ENCODE measurements at regions of chr2 and their contacts with region 1.

Region 1: DNA sequence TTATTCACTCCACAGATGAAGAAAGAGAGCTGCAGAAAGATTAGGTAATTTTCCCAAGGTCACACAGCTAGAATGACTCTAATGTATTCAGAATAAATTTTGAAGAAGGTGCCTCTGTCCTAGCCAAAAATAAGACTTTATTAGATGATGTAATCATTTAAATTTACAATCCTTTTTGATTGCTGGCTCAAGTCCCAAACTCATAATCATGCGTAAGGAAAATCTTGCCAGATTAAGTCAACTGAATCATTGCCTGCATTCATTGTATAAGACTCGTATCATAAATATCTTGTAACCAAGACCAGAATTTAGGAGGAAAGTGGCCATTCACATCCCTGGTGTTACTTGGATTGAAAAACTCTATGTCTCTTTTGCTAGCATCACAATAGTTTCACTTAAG is 53.1 kb upstream of the STK39 start:
- DNase-seq: no peak
- ATAC-seq: no peak
- H3K4me3 ChIP-seq: no peak overlapping the region
- H3K4me3 Mint-ChIP-seq: no peak overlapping the region
- H3K27ac ChIP-seq: no peak overlapping the region
- H3K27ac Mint-ChIP-seq: no peak overlapping the region
- H3K4me1 ChIP-seq: no peaks in the 10 kb centered on the region
- H3K4me1 Mint-ChIP-seq: peaks cover 0 to 1% (median 0%) of the 10 kb centered on the region in 7 donors
- H3K27me3 ChIP-seq: no peaks in the 10 kb centered on the region
- H3K27me3 Mint-ChIP-seq: peaks cover 0 to 5% (median 0%) of the 10 kb centered on the region in 5 donors

Region 2: GRCh38 chr2:167127135-167127534 is 1173.3 kb before region 1 on chr2:
- CTCF ChIA-PET with region 1: no interaction called
- POLR2A ChIA-PET with region 1: no interaction called
- intact Hi-C with region 1: no loop called
- DNase-seq: no peak
- ATAC-seq: no peak
- H3K4me3 ChIP-seq: no peak overlapping the region
- H3K4me3 Mint-ChIP-seq: no peak overlapping the region
- H3K27ac ChIP-seq: no peak overlapping the region
- H3K27ac Mint-ChIP-seq: no peak overlapping the region
- H3K4me1 ChIP-seq: no peaks in the 10 kb centered on the region
- H3K4me1 Mint-ChIP-seq: peaks cover 0 to 2% (median 0%) of the 10 kb centered on the region in 7 donors
- H3K27me3 ChIP-seq: no peaks in the 10 kb centered on the region
- H3K27me3 Mint-ChIP-seq: no peaks in the 10 kb centered on the region

Region 3: GRCh38 chr2:167249197-167249596 is 1051.3 kb before region 1 on chr2:
- CTCF ChIA-PET with region 1: no interaction called
- POLR2A ChIA-PET with region 1: no interaction called
- intact Hi-C with region 1: loop called in 1 of 2 experiments (anchors 5 kb)
- DNase-seq: no peak
- ATAC-seq: no peak
- H3K4me3 ChIP-seq: no peak overlapping the region
- H3K4me3 Mint-ChIP-seq: no peak overlapping the region
- H3K27ac ChIP-seq: no peak overlapping the region
- H3K27ac Mint-ChIP-seq: no peak overlapping the region
- H3K4me1 ChIP-seq: no peaks in the 10 kb centered on the region
- H3K4me1 Mint-ChIP-seq: no peaks in the 10 kb centered on the region
- H3K27me3 ChIP-seq: no peaks in the 10 kb centered on the region
- H3K27me3 Mint-ChIP-seq: peaks cover 0 to 7% (median 0%) of the 10 kb centered on the region in 5 donors

Region 4: GRCh38 chr2:168357797-168358472 is 57.5 kb after region 1 on chr2:
- CTCF ChIA-PET with region 1: no interaction called
- POLR2A ChIA-PET with region 1: no interaction called
- intact Hi-C with region 1: no loop called
- DNase-seq: no peak
- ATAC-seq: no peak
- H3K4me3 ChIP-seq: no peak overlapping the region
- H3K4me3 Mint-ChIP-seq: peak overlapping the region in 7 of 10 donors; percentile 22 to 48 (median 29)
- H3K27ac ChIP-seq: no peak overlapping the region
- H3K27ac Mint-ChIP-seq: peak overlapping the region in 2 of 9 donors; percentile 32 to 55
- H3K4me1 ChIP-seq: peaks cover 0 to 15% of the 10 kb centered on the region in 2 donors
- H3K4me1 Mint-ChIP-seq: peaks cover 18 to 48% (median 37%) of the 10 kb centered on the region in 7 donors
- H3K27me3 ChIP-seq: no peaks in the 10 kb centered on the region
- H3K27me3 Mint-ChIP-seq: peaks cover 0 to 13% (median 0%) of the 10 kb centered on the region in 5 donors

Region 5: DNA sequence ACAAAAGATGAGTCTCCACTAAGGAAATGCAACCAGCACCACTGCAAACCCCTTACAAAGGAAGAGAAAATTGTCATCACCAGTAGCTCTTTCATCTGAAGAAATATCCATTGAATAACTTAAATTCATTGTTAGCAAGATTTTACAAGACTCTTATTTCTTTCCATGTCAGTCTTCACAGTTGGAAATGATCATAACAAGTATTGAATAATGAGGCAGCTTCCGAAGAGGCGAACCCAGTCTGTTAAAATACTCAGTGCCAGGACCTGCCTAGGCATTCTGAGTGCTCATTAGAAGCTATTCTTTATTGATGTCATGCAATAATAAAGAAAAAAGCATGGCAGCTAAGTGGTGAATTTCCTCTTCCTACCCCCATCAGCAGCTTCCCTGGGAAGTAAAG is 535.5 kb after region 1 on chr2:
- CTCF ChIA-PET with region 1: no interaction called
- POLR2A ChIA-PET with region 1: no interaction called
- intact Hi-C with region 1: no loop called
- DNase-seq: no peak
- ATAC-seq: no peak
- H3K4me3 ChIP-seq: no peak overlapping the region
- H3K4me3 Mint-ChIP-seq: no peak overlapping the region
- H3K27ac ChIP-seq: no peak overlapping the region
- H3K27ac Mint-ChIP-seq: no peak overlapping the region
- H3K4me1 ChIP-seq: no peaks in the 10 kb centered on the region
- H3K4me1 Mint-ChIP-seq: no peaks in the 10 kb centered on the region
- H3K27me3 ChIP-seq: no peaks in the 10 kb centered on the region
- H3K27me3 Mint-ChIP-seq: no peaks in the 10 kb centered on the region

Measured in naive thymus-derived CD4-positive, alpha-beta T cell (primary cell).